Dendritic cell treated with granulocyte-macrophage colony-stimulating factor and Interleukin-4, amounts not matched to agents 40 ng/mL and 50 ng/mL, for 4 days (primary cell): ENCODE measurements at regions of chr1 and their contacts with region 1.

Region 1: DNA sequence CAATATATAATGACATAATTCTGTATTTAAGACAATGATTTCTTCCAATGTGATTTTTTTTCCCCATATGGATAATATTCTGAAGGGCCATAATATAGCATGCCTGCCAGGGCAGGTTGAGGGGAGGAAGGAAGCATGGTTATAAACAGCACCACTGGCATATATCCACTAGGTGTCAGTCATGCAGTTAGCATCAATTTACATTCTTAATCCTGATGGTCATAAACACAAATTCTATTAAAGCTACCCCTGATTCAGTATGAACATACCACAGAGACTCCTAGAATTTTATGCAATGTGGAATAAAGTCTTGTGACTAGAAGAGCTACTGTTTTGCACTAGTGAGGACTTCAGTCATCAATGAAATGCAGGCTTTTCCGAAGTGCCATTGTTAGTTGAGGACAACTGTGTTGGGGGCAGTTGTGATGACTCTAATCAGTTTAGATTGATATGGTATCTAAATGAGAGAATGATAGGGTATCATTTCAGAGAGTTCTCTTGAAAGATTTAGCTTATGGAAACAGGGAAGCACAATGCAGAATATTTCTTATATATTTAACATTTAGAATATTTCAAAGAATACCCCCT is 342.7 kb upstream of the NR5A2 start:
- H3K4me3 Mint-ChIP-seq: no peak overlapping the region
- H3K27ac Mint-ChIP-seq: no peak overlapping the region
- H3K4me1 Mint-ChIP-seq: no peaks in the 10 kb centered on the region
- H3K27me3 Mint-ChIP-seq: peaks cover 2% of the 10 kb centered on the region

Region 2: GRCh38 chr1:198497346-198498102 is 1187.3 kb before region 1 on chr1:
- intact Hi-C with region 1: no loop called
- H3K4me3 Mint-ChIP-seq: peak overlapping the region; percentile 7
- H3K27ac Mint-ChIP-seq: peak overlapping the region; percentile 83
- H3K4me1 Mint-ChIP-seq: peaks cover 47% of the 10 kb centered on the region
- H3K27me3 Mint-ChIP-seq: no peaks in the 10 kb centered on the region

Region 3: GRCh38 chr1:199490804-199491527 is 193.8 kb before region 1 on chr1:
- intact Hi-C with region 1: no loop called
- H3K4me3 Mint-ChIP-seq: no peak overlapping the region
- H3K27ac Mint-ChIP-seq: no peak overlapping the region
- H3K4me1 Mint-ChIP-seq: no peaks in the 10 kb centered on the region
- H3K27me3 Mint-ChIP-seq: no peaks in the 10 kb centered on the region

Region 4: GRCh38 chr1:199522936-199523335 is 161.8 kb before region 1 on chr1:
- intact Hi-C with region 1: no loop called
- H3K4me3 Mint-ChIP-seq: no peak overlapping the region
- H3K27ac Mint-ChIP-seq: no peak overlapping the region
- H3K4me1 Mint-ChIP-seq: no peaks in the 10 kb centered on the region
- H3K27me3 Mint-ChIP-seq: no peaks in the 10 kb centered on the region

Region 5: GRCh38 chr1:200038981-200039848 is 354.4 kb after region 1 on chr1:
- intact Hi-C with region 1: loop called (anchors 10 kb)
- H3K4me3 Mint-ChIP-seq: peak overlapping the region; percentile 85
- H3K27ac Mint-ChIP-seq: no peak overlapping the region
- H3K4me1 Mint-ChIP-seq: peaks cover 51% of the 10 kb centered on the region
- H3K27me3 Mint-ChIP-seq: peaks cover 45% of the 10 kb centered on the region

Region 6: DNA sequence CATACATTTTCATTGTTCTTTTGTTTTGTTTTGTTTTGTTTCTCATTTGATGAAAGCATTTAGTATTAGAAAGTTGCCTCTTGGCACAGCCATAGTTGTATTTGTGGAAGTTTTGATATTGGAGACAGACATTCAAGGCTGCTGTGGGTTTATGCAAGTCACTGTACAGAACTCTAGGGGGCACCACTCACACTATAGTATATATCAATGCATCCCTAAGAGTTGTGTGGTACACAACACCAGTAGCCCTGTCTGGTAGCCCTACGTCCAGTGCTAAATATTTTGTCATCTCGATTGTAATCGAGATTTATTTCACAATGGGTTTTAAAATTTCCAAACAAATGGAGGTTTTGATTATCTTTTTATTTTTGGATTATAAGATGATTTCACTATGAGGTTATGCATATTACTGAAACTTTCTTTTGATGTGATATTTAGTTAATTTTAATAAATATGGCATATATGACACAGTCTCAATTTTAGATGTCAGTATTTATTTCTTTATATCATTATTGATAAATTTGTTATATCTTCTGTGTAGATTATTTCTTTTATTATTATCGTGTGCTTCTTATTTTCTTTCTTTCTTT is 455.0 kb after region 1 on chr1:
- intact Hi-C with region 1: loop called (anchors 5 kb)
- H3K4me3 Mint-ChIP-seq: no peak overlapping the region
- H3K27ac Mint-ChIP-seq: no peak overlapping the region
- H3K4me1 Mint-ChIP-seq: peaks cover 5% of the 10 kb centered on the region
- H3K27me3 Mint-ChIP-seq: no peaks in the 10 kb centered on the region

Region 7: GRCh38 chr1:200302192-200302920 is 617.6 kb after region 1 on chr1:
- intact Hi-C with region 1: loop called (anchors 10 kb)
- H3K4me3 Mint-ChIP-seq: peak overlapping the region; percentile 72
- H3K27ac Mint-ChIP-seq: no peak overlapping the region
- H3K4me1 Mint-ChIP-seq: peaks cover 23% of the 10 kb centered on the region
- H3K27me3 Mint-ChIP-seq: peaks cover 17% of the 10 kb centered on the region

Region 8: DNA sequence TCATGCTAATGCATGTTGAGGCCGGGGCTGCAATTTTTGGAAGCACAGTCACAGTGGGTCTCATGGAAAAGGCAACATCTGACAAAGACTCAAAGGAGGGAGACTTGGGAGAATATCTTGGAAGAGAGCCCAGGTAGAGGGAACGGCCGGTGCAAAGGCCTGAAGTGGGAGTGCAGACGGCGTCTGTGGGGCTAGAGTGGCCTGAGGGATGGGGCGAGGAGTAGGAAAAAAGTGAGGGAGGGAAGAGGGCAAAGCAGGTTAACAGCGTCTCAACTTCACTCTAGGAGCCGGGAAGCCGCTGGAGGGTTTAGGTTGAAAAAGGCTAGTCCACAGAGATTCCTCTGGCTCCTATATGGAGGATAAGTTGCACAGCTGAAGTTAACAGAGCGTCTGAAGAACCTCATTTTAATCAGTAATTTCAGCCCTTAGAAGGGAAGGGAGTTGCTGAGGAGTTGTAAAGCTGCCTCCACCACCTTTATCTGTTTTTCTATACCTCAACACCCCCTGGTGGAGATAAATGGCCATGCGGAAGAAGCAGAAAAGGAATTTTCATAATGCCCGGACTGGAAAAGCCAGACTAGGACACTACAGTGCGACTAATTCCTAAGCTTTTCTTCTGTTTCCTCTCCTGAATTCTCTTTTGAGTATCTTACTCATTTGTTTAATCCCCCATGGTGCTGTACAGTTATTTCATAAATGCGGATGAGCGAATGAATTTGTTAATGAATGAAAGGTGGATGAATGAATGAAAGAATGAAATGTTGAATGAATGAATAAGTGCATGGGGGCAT is 803.8 kb after region 1 on chr1:
- intact Hi-C with region 1: loop called (anchors 2 kb)
- H3K4me3 Mint-ChIP-seq: no peak overlapping the region
- H3K27ac Mint-ChIP-seq: no peak overlapping the region
- H3K4me1 Mint-ChIP-seq: peaks cover 10% of the 10 kb centered on the region
- H3K27me3 Mint-ChIP-seq: peaks cover 4% of the 10 kb centered on the region

Region 9: GRCh38 chr1:200510228-200510623 is 825.4 kb after region 1 on chr1:
- intact Hi-C with region 1: loop called (anchors 5 kb)
- H3K4me3 Mint-ChIP-seq: no peak overlapping the region
- H3K27ac Mint-ChIP-seq: no peak overlapping the region
- H3K4me1 Mint-ChIP-seq: no peaks in the 10 kb centered on the region
- H3K27me3 Mint-ChIP-seq: peaks cover 4% of the 10 kb centered on the region